ENCODE measurements at regions of chr5 and their contacts with region 1.

Region 1: DNA sequence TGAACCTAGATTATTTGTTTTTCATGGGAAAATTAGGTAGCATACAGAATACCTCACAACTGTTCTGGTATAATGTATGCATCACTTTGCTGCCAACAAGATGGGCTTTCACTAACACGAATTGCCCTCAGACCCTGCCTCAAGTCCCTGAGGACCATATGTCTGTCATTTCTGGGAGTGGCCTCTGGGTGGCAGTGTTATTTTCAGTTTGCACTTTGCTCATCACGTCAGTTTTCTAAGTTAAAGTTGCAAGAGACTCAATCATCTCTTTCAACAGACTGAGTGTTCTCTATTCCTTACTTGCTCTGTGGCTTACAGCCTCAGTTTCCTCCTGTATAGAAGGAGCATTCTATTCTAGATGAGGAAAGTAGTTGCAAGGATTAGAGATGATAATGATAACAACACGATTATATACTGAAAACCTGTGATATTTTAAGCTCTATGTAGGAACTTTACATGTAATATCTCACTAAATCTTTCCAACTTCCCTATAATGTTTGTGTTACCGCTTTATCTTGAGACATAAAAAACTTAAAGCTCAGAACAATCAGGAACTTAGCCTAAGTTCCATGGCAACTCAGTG is 55.7 kb downstream of the TSSK1B start:
- DNase-seq: peak; percentile 62
- ATAC-seq: peak; percentile 66
- H3K4me3 ChIP-seq: no peak overlapping the region
- H3K27ac ChIP-seq: peak overlapping the region; percentile 19; the same call in 1 of the 2 replicates
- H3K4me1 ChIP-seq: peaks cover 16% of the 10 kb centered on the region
- H3K27me3 ChIP-seq: no peaks in the 10 kb centered on the region
- CTCF ChIP-seq: peak; percentile 64
- POLR2A ChIP-seq: no peak
- RAD21 ChIP-seq: peak; percentile 61

Region 2: DNA sequence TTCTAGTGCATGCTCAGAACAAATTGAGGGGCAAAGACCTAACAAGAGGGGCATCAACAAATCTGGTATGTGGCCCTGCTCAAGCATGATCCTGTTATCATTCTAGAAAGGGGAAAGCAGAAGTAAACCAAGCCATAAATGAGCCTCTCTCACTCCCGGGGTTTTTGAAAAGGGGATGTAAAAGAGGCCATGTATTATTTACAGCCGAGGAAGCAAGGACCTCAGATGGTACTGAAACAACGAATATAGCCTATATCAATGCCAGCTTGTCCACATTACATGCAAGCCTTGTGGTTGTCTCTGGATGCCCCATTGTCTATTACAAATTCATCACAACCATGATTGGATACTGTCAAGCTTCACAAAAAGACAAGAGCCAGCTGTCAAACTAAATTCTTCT is 191.1 kb before region 1 on chr5:
- CTCF ChIA-PET with region 1: no interaction called
- POLR2A ChIA-PET with region 1: no interaction called
- dilution Hi-C with region 1: no loop called
- in situ Hi-C with region 1: no loop called
- intact Hi-C with region 1: no loop called
- DNase-seq: no peak
- ATAC-seq: no peak
- H3K4me3 ChIP-seq: no peak overlapping the region
- H3K27ac ChIP-seq: no peak overlapping the region
- H3K4me1 ChIP-seq: peaks cover 2% of the 10 kb centered on the region; the same call in 1 of the 2 replicates
- H3K27me3 ChIP-seq: no peaks in the 10 kb centered on the region
- CTCF ChIP-seq: no peak
- POLR2A ChIP-seq: no peak
- RAD21 ChIP-seq: no peak

Region 3: GRCh38 chr5:113487781-113488644 is 109.0 kb after region 1 on chr5 and contains the start of gene MCC:
- CTCF ChIA-PET with region 1: no interaction called
- POLR2A ChIA-PET with region 1: no interaction called
- dilution Hi-C with region 1: no loop called
- in situ Hi-C with region 1: no loop called
- intact Hi-C with region 1: loop called (anchors 2 kb)
- DNase-seq: peak; percentile 93
- ATAC-seq: peak; percentile 88
- H3K4me3 ChIP-seq: peak within 1 kb of the TSS; percentile 86
- H3K27ac ChIP-seq: peak within 1 kb of the TSS; percentile 82
- H3K4me1 ChIP-seq: peaks cover 8% of the 10 kb centered on the region
- H3K27me3 ChIP-seq: no peaks in the 10 kb centered on the region
- CTCF ChIP-seq: no peak
- POLR2A ChIP-seq: no peak; the same call in none of the 2 replicates
- RAD21 ChIP-seq: no peak
- total RNA-seq, gene MCC: 17.8 and 20.6 TPM in 2 replicates

Region 4: GRCh38 chr5:113502073-113502472 is 123.0 kb after region 1 on chr5:
- CTCF ChIA-PET with region 1: no interaction called
- POLR2A ChIA-PET with region 1: no interaction called
- dilution Hi-C with region 1: no loop called
- in situ Hi-C with region 1: loop called (anchors 5 kb)
- intact Hi-C with region 1: no loop called
- DNase-seq: no peak
- ATAC-seq: no peak
- H3K4me3 ChIP-seq: no peak overlapping the region
- H3K27ac ChIP-seq: no peak overlapping the region
- H3K4me1 ChIP-seq: no peaks in the 10 kb centered on the region
- H3K27me3 ChIP-seq: no peaks in the 10 kb centered on the region
- CTCF ChIP-seq: no peak
- POLR2A ChIP-seq: no peak
- RAD21 ChIP-seq: no peak

Region 5: GRCh38 chr5:113663880-113664541 is 285.0 kb after region 1 on chr5:
- CTCF ChIA-PET with region 1: no interaction called
- POLR2A ChIA-PET with region 1: no interaction called
- dilution Hi-C with region 1: no loop called
- in situ Hi-C with region 1: no loop called
- intact Hi-C with region 1: no loop called
- DNase-seq: peak; percentile 16
- ATAC-seq: no peak
- H3K4me3 ChIP-seq: no peak overlapping the region
- H3K27ac ChIP-seq: no peak overlapping the region
- H3K4me1 ChIP-seq: no peaks in the 10 kb centered on the region
- H3K27me3 ChIP-seq: peaks cover 2% of the 10 kb centered on the region; the same call in 1 of the 2 replicates
- CTCF ChIP-seq: peak; percentile 21; the same call in 1 of the 2 replicates
- POLR2A ChIP-seq: no peak
- RAD21 ChIP-seq: no peak